ENCODE measurements at regions of chr17 and their contacts with region 1.

Region 1: GRCh38 chr17:50026901-50027630 is 28.8 kb upstream of the ITGA3 start:
- DNase-seq: peak; percentile 98
- H3K4me3 Mint-ChIP-seq: peak overlapping the region; percentile 68
- H3K27ac Mint-ChIP-seq: peak overlapping the region; percentile 85
- H3K4me1 Mint-ChIP-seq: peaks cover 42% of the 10 kb centered on the region
- H3K27me3 Mint-ChIP-seq: no peaks in the 10 kb centered on the region
- CTCF ChIP-seq: peak; percentile 99

Region 2: DNA sequence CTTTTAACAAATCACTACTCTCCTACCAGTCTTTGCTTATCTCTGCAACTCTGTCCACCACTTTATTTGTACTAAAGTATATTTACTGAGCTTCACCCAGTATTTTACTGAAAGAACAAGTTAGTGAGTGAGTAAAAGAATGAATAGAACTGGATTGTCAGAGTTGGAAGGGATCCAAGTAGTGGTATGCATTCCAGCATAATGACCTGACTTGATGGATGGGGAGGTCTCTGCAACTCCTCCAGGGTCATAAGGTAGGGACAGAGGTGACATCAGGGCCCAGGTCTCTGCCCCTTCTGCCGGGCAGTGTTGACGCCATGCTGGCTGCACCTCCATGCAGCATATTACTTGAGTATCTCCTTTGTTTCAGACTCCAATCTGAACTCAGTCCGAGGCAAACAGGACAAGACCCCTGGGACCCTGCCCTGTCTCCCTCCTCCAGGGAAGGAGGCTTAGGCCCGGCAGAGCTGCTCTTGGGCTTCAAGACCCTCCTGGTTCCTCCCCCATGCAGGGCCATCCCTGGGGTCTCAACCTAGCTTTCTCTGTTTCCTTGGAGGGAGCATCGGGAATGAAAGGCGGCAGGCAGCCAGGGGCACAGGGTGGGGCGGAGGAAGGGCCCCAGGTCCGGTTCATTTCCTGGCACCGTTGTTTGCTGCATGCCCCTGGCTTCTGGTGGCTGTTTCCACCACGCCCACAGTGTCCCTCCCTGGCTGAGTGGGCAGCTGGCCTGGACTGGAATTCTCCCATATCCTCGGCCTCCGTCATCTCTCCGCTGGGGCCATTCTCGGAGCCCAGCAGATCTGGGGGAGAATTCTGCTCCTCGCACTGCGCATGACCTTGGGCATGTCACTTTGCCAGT is 16.5 kb after region 1 on chr17:
- CTCF ChIA-PET with region 1: interaction called, 11 read pairs
- intact Hi-C with region 1: no loop called
- DNase-seq: peak; percentile 79
- H3K4me3 Mint-ChIP-seq: peak overlapping the region; percentile 15
- H3K27ac Mint-ChIP-seq: peak overlapping the region; percentile 27
- H3K4me1 Mint-ChIP-seq: peaks cover 63% of the 10 kb centered on the region
- H3K27me3 Mint-ChIP-seq: no peaks in the 10 kb centered on the region
- CTCF ChIP-seq: no peak

Region 3: DNA sequence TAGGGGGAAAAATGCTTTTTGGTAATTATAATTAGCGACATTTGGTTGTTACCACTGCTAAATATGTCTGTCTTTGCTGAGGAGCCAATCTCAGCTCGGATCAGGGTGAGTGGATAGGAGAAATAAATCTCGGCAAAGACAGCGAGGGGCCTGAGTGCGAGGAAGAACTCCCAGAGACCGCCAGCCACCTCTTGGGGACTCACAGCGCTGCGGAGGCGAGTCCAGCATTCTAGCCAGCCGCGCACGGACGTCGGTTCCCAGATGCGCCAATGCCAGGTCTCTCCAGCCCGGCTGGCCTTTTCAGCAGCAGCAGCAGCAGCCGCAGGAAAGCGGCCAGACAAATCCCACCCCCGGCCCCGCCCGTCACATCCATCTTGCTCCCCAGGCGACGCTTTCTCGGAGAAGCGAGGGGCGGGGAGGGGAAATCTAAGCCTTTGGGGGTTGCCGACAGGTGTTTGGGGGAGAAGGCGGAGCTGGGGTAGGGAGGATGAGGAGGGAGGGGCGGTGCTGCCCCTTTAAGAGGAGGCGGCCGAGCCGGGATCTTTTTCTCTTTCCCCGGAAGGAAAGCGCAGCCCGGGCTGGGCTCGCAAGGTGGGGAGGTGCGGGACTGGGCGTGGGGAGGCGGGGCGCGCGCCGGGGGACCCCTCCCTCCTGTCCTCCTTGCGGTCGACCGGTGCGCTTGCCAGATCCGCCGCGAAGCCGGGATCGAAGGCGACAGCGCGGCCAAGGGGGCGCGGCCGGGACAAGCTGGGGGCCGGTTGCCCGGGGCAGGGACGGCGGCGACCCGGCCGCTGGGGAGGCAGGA is 28.6 kb after region 1 on chr17 and contains the start of gene ITGA3:
- CTCF ChIA-PET with region 1: interaction called, 142 read pairs
- intact Hi-C with region 1: loop called (anchors 1 kb)
- DNase-seq: peak; percentile 98
- H3K4me3 Mint-ChIP-seq: peak within 1 kb of the TSS; percentile 82
- H3K27ac Mint-ChIP-seq: peak within 1 kb of the TSS; percentile 96
- H3K4me1 Mint-ChIP-seq: peaks cover 74% of the 10 kb centered on the region
- H3K27me3 Mint-ChIP-seq: no peaks in the 10 kb centered on the region
- CTCF ChIP-seq: no peak
- total RNA-seq, gene ITGA3: 539 and 709 TPM in 2 replicates

Region 4: DNA sequence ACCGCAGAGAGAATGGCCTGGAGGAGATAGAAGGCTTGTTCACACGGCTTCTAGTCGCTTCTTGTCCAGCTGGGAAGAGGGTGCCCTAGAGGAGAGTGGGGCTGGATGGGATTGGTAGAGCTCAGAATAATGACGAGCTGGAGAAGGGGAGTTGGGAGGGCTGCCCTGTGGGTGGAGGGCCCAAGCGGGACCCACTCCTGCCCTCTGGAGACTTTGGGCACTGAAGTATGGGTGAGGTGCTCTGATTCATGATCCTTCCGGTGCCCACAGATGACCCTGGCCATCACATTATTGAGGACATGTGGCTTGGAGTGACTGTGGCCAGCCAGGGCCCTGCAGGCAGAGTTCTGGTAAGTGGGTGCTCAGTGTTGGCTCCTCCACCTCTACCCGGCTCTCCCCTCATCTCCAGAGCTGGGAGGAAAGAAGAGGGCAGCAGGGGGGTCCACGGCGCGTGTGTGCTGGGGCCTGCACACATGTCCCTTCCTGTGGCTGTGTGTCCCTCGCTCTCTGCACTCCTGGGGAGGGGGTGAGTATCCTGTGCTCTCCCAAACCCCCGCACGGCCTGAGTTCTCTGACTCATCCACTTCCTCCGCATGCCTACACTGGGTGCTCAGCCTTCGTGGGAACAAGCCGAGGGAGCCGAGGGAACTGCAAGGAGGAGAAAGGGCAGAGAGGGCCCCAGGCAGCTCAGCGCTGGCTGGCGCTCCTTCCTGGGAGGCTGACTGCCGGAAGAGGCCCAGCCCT is 37.4 kb after region 1 on chr17:
- CTCF ChIA-PET with region 1: interaction called, 142 read pairs
- intact Hi-C with region 1: loop called (anchors 1 kb)
- DNase-seq: peak; percentile 91
- H3K4me3 Mint-ChIP-seq: peak overlapping the region; percentile 64
- H3K27ac Mint-ChIP-seq: peak overlapping the region; percentile 87
- H3K4me1 Mint-ChIP-seq: peaks cover 80% of the 10 kb centered on the region
- H3K27me3 Mint-ChIP-seq: no peaks in the 10 kb centered on the region
- CTCF ChIP-seq: peak; percentile 16

Region 5: GRCh38 chr17:50079334-50080095 is 52.4 kb after region 1 on chr17:
- CTCF ChIA-PET with region 1: interaction called, 31 read pairs
- intact Hi-C with region 1: no loop called
- DNase-seq: peak; percentile 86
- H3K4me3 Mint-ChIP-seq: no peak overlapping the region
- H3K27ac Mint-ChIP-seq: peak overlapping the region; percentile 20
- H3K4me1 Mint-ChIP-seq: peaks cover 36% of the 10 kb centered on the region
- H3K27me3 Mint-ChIP-seq: no peaks in the 10 kb centered on the region
- CTCF ChIP-seq: peak; percentile 98

Region 6: GRCh38 chr17:50087246-50087911 is 60.3 kb after region 1 on chr17:
- CTCF ChIA-PET with region 1: interaction called, 35 read pairs
- intact Hi-C with region 1: loop called (anchors 1 kb)
- DNase-seq: peak; percentile 91
- H3K4me3 Mint-ChIP-seq: no peak overlapping the region
- H3K27ac Mint-ChIP-seq: peak overlapping the region; percentile 65
- H3K4me1 Mint-ChIP-seq: no peaks in the 10 kb centered on the region
- H3K27me3 Mint-ChIP-seq: no peaks in the 10 kb centered on the region
- CTCF ChIP-seq: peak; percentile 98

Region 7: DNA sequence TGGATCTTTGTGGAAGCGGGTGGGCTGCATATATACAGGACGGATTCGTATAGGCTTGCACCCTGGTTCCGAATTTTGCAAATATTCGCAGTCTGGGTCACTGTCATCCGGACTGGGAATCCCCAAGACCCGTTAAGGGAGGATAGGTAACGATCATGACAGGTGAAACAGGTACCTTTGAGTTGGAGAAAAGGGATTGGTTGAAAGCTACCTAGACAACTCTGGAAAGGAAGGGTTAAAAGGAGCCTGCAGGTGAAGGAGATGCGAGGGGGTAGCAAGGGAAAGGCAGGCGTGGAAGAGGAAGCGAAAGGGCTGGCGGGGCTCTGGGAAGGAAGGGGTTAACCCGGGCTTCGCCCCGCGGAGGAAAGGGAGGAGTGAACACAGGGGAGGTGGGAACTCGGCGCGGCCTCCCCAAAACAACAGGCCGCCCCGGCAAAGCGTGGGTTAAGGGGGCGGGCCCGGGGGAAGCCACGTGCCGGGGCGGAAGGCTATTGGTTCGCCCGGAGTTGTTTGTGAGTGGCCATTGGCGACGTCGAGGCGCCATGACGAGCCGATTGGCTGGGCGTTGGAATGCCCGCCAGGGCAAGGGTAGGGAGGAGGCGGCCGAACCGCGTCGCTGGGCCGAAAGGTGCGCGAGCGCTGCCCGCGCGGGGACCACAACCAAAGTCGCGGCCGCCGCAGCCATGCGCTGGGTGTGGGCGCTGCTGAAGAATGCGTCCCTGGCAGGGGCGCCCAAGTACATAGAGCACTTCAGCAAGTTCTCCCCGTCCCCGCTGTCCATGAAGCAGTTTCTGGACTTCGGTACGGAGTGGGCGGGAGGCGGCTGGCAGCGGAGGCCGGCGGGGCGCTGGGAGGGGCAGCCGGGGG is 67.9 kb after region 1 on chr17 and contains the start of gene PDK2:
- CTCF ChIA-PET with region 1: interaction called, 34 read pairs
- intact Hi-C with region 1: no loop called
- DNase-seq: peak; percentile 98
- H3K4me3 Mint-ChIP-seq: peak within 1 kb of the TSS; percentile 90
- H3K27ac Mint-ChIP-seq: peak within 1 kb of the TSS; percentile 89
- H3K4me1 Mint-ChIP-seq: peaks cover 48% of the 10 kb centered on the region
- H3K27me3 Mint-ChIP-seq: no peaks in the 10 kb centered on the region
- CTCF ChIP-seq: no peak
- total RNA-seq, gene PDK2: 29.5 and 39.1 TPM in 2 replicates

Region 8: GRCh38 chr17:50107790-50108414 is 80.8 kb after region 1 on chr17:
- CTCF ChIA-PET with region 1: no interaction called
- intact Hi-C with region 1: no loop called
- DNase-seq: no peak
- H3K4me3 Mint-ChIP-seq: no peak overlapping the region
- H3K27ac Mint-ChIP-seq: no peak overlapping the region
- H3K4me1 Mint-ChIP-seq: peaks cover 4% of the 10 kb centered on the region
- H3K27me3 Mint-ChIP-seq: no peaks in the 10 kb centered on the region
- CTCF ChIP-seq: no peak

Measured in Calu3 (cell line).